Activated CD4-positive, alpha-beta T cell treated with anti-CD3 and anti-CD28 coated beads, Interleukin-2, amount 10 ng/mL, durations not matched to agents 24 days and 14 days (primary cell): ENCODE measurements at regions of chr11 and their contacts with region 1.

Region 1: GRCh38 chr11:7442588-7443215 is 42.6 kb upstream of the OLFML1 start:
- DNase-seq: peak; percentile 92
- H3K4me3 Mint-ChIP-seq: no peak overlapping the region
- H3K27ac Mint-ChIP-seq: no peak overlapping the region
- H3K4me1 Mint-ChIP-seq: no peaks in the 10 kb centered on the region
- H3K27me3 Mint-ChIP-seq: no peaks in the 10 kb centered on the region

Region 2: DNA sequence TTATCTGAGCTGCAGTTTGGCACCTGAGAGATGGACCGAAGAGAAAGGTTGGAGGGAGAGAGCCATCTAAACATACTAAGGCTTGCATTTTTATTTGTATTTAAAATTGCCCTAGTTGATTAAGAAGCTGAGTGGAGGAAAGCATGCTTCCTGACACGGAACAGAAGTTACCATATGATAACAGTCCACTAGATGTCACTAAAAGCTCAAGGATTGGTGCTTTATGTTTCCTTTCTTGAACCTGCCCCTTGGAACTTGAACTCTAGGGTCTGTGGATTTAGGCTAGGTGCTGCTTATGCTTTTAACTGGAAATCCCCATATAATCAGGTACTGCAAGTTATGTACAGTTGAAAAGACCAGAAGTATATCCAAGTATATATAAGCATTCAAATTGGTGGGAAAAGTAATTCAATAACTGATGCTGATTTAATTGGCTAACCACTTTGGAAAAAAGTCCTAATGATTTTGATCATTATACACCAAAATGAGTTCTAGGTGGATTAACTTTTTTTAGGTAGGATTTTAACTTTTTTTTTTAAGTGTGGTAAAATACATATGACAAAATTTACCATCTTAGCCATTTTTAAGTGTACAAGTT is 344.4 kb before region 1 on chr11:
- intact Hi-C with region 1: loop called (anchors 2 kb)
- DNase-seq: peak; percentile 70
- H3K4me3 Mint-ChIP-seq: no peak overlapping the region
- H3K27ac Mint-ChIP-seq: no peak overlapping the region
- H3K4me1 Mint-ChIP-seq: no peaks in the 10 kb centered on the region
- H3K27me3 Mint-ChIP-seq: peaks cover 8% of the 10 kb centered on the region

Region 3: DNA sequence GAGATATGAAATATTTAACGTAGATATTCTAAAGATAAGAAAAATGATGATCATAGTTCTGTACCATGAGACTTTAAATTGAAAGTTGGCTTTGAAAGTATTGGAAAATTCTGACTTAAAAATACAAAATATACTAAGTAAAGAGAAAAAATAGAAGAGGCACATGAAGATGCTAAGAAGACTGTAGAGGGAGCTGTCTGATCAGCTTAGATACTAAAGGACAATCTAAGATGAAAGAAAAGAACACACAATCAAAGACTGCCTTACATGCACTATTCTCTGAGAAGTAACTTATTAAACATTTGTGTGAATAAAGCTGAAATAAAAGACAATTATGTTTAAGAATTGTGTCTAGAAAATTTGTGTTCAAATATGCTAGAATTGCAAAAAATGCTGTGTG is 298.8 kb before region 1 on chr11:
- intact Hi-C with region 1: loop called (anchors 5 kb)
- DNase-seq: no peak
- H3K4me3 Mint-ChIP-seq: no peak overlapping the region
- H3K27ac Mint-ChIP-seq: no peak overlapping the region
- H3K4me1 Mint-ChIP-seq: no peaks in the 10 kb centered on the region
- H3K27me3 Mint-ChIP-seq: no peaks in the 10 kb centered on the region

Region 4: DNA sequence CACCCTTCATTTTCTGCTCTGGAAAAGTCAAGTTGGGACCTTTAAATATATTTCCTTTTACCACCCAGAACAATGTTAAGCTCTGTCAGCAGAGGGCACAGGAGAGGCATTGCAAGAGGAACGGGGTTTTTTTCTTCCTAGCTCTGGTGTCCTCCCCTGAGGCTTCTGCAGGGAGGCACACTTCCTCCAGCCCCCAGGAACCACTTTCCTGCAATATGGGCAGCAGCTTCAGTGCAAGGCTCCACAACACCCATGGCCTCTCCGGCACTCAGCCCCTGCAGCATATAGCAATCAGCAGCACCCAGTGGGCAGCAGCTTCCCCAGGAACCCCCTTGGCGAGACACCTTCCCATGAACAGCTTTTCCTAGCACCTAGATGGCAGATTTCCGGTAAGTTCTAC is 89.6 kb before region 1 on chr11:
- intact Hi-C with region 1: loop called (anchors 2 kb)
- DNase-seq: peak; percentile 70
- H3K4me3 Mint-ChIP-seq: no peak overlapping the region
- H3K27ac Mint-ChIP-seq: no peak overlapping the region
- H3K4me1 Mint-ChIP-seq: no peaks in the 10 kb centered on the region
- H3K27me3 Mint-ChIP-seq: peaks cover 1% of the 10 kb centered on the region

Region 5: GRCh38 chr11:7694235-7694634 is 251.5 kb after region 1 on chr11:
- intact Hi-C with region 1: loop called (anchors 2 kb)
- DNase-seq: no peak
- H3K4me3 Mint-ChIP-seq: no peak overlapping the region
- H3K27ac Mint-ChIP-seq: no peak overlapping the region
- H3K4me1 Mint-ChIP-seq: no peaks in the 10 kb centered on the region
- H3K27me3 Mint-ChIP-seq: peaks cover 24% of the 10 kb centered on the region